Heart right ventricle (tissue), 16 donors: ENCODE measurements at regions of chrX and their contacts with region 1.

Region 1: GRCh38 chrX:111244235-111244750 is 26.0 kb downstream of the CAPN6 start:
- DNase-seq: no peak
- ATAC-seq: no peak
- H3K4me3 ChIP-seq: no peak overlapping the region
- H3K27ac ChIP-seq: no peak overlapping the region
- H3K4me1 ChIP-seq: no peaks in the 10 kb centered on the region
- H3K27me3 ChIP-seq: peaks cover 0 to 66% (median 0%) of the 10 kb centered on the region in 7 donors
- CTCF ChIP-seq: peak in 7 of 9 donors; percentile 31 to 54 (median 38)

Region 2: DNA sequence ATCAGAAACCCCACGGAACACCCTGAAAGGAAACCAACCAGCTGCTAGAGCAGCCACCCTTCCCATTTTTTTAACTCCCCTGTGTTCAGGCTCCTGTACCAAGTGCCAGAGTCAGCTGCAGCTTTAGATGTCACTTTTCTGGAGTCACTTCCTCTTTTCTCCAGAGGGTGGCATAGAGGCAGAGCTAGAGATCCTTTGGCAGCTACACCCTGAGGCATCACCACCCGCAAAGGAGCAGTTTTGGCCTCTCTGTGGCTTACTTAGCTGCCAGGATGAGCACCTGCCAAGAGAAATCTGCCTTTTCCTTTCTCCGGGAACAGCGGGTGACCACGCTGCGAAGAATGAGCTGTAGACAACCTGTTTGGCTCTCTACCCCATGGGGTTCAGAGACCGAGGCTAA is 390.7 kb before region 1 on chrX:
- intact Hi-C with region 1: loop called in 2 of 10 experiments (anchors 5 kb)
- DNase-seq: peak in 1 of 2 donors; percentile 3
- ATAC-seq: peak in 1 of 8 donors; percentile 47
- H3K4me3 ChIP-seq: no peak overlapping the region
- H3K27ac ChIP-seq: no peak overlapping the region
- H3K4me1 ChIP-seq: no peaks in the 10 kb centered on the region
- H3K27me3 ChIP-seq: peaks cover 0 to 62% (median 0%) of the 10 kb centered on the region in 7 donors
- CTCF ChIP-seq: peak in 6 of 9 donors; percentile 16 to 32 (median 26)

Region 3: DNA sequence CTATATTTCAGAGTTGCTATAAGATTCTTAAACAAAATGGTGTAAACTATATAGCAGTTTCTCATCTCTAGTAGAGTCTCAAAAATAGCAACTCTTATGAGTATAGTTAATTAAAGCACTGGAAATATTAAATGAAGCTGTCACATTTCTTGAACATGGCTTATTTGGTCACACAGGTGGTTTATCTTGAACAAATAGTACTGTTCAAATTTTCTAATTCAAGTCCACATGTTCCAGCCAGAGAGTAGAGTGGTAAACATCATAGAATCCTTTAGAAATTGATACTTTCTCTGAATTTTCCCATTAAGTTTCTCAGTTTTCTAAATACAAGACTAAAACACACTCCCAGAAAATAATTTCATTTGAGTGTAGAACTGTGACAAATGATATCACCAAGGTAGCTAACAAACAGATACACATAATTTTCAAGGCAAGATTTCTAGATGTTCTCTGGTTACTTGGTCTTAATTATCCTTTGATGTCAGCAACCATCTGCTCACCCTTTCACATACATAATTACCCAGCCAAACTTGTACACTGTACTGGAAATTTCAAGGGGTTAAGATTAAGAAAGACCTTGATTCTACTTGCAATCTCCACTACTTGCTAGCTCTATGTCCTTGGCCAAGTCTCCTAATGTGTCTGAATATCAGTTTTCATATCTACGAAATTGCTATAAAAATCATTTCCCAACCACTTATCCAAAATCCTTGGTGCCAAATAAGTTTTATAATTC is 172.6 kb before region 1 on chrX:
- intact Hi-C with region 1: no loop called
- DNase-seq: no peak
- ATAC-seq: no peak
- H3K4me3 ChIP-seq: no peak overlapping the region
- H3K27ac ChIP-seq: no peak overlapping the region
- H3K4me1 ChIP-seq: no peaks in the 10 kb centered on the region
- H3K27me3 ChIP-seq: peaks cover 0 to 61% (median 0%) of the 10 kb centered on the region in 7 donors
- CTCF ChIP-seq: no peak